T-cell (primary cell): ENCODE measurements at regions of chr17 and their contacts with region 1.

Region 1: GRCh38 chr17:5413682-5414081 is 5.8 kb downstream of the NUP88 start:
- DNase-seq: no peak
- ATAC-seq: no peak
- H3K4me3 ChIP-seq: no peak overlapping the region
- H3K4me3 Mint-ChIP-seq: no peak overlapping the region
- H3K27ac ChIP-seq: no peak overlapping the region
- H3K27ac Mint-ChIP-seq: no peak overlapping the region
- H3K4me1 ChIP-seq: peaks cover 10 to 23% of the 10 kb centered on the region in 2 experiments
- H3K4me1 Mint-ChIP-seq: peaks cover 42 to 59% (median 55%) of the 10 kb centered on the region in 3 donors
- H3K27me3 ChIP-seq: no peaks in the 10 kb centered on the region
- H3K27me3 Mint-ChIP-seq: no peaks in the 10 kb centered on the region

Region 2: GRCh38 chr17:3574231-3574630 is 1839.5 kb before region 1 on chr17:
- CTCF ChIA-PET with region 1: no interaction called
- POLR2A ChIA-PET with region 1: interaction called in 1 of 2 experiments, 11 read pairs
- DNase-seq: no peak
- ATAC-seq: no peak
- H3K4me3 ChIP-seq: no peak overlapping the region
- H3K4me3 Mint-ChIP-seq: no peak overlapping the region
- H3K27ac ChIP-seq: no peak overlapping the region
- H3K27ac Mint-ChIP-seq: no peak overlapping the region
- H3K4me1 ChIP-seq: no peaks in the 10 kb centered on the region
- H3K4me1 Mint-ChIP-seq: no peaks in the 10 kb centered on the region
- H3K27me3 ChIP-seq: no peaks in the 10 kb centered on the region
- H3K27me3 Mint-ChIP-seq: no peaks in the 10 kb centered on the region